Heart left ventricle (tissue), 16 donors: ENCODE measurements at regions of chr2 and their contacts with region 1.

Region 1: GRCh38 chr2:30511122-30512083 is 64.4 kb downstream of the LCLAT1 start:
- DNase-seq: peak; percentile 45 to 63 (median 55)
- ATAC-seq: peak; percentile 73 to 87 (median 82)
- H3K4me3 ChIP-seq: no peak overlapping the region
- H3K27ac ChIP-seq: peak overlapping the region in 11 of 12 donors; percentile 45 to 80 (median 60)
- H3K4me1 ChIP-seq: peaks cover 3 to 62% (median 38%) of the 10 kb centered on the region in 12 donors
- H3K27me3 ChIP-seq: no peaks in the 10 kb centered on the region
- CTCF ChIP-seq: no peak
- POLR2A ChIP-seq: no peak

Region 2: DNA sequence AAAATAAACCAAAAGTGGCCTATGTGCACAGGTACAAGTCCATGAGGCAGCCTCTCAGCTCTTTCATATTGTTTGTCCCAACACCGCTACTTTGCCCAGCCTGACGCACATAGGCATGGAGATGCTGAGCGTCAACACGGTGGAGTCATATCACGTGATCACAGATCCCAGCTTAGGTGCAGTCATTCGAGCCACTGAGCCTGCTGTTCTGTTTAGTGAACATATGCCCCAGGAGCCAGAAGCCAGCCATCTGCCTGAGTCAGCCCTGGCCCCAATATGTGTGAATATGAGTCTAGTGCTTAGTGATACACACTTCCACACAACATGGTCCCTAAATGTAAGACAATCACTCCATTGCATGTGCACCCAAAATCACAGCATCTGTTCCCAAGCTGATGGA is 152.6 kb before region 1 on chr2:
- intact Hi-C with region 1: loop called in 1 of 10 experiments (anchors 2 kb)
- DNase-seq: no peak
- ATAC-seq: no peak
- H3K4me3 ChIP-seq: no peak overlapping the region
- H3K27ac ChIP-seq: peak overlapping the region in 11 of 12 donors; percentile 71 to 90 (median 81)
- H3K4me1 ChIP-seq: peaks cover 14 to 62% (median 47%) of the 10 kb centered on the region in 12 donors
- H3K27me3 ChIP-seq: no peaks in the 10 kb centered on the region
- CTCF ChIP-seq: no peak
- POLR2A ChIP-seq: no peak